ENCODE measurements at regions of chr20 and their contacts with region 1.

Region 1: GRCh38 chr20:56554869-56555268 is 21.8 kb downstream of the FAM209B start:
- DNase-seq: peak; percentile 29
- H3K4me3 ChIP-seq: no peak overlapping the region
- H3K27ac ChIP-seq: peak overlapping the region in 2 of 4 donors; percentile 28 to 51
- H3K4me1 ChIP-seq: peaks cover 0 to 4% (median 2%) of the 10 kb centered on the region in 4 donors
- H3K27me3 ChIP-seq: no peaks in the 10 kb centered on the region
- CTCF ChIP-seq: no peak
- EP300 ChIP-seq: no peak
- POLR2A ChIP-seq: no peak

Region 2: GRCh38 chr20:56964888-56965287 is 410.0 kb after region 1 on chr20:
- in situ Hi-C with region 1: loop called in 3 of 4 experiments (anchors 10 kb)
- intact Hi-C with region 1: loop called (anchors 10 kb)
- DNase-seq: no peak
- H3K4me3 ChIP-seq: no peak overlapping the region
- H3K27ac ChIP-seq: no peak overlapping the region
- H3K4me1 ChIP-seq: no peaks in the 10 kb centered on the region
- H3K27me3 ChIP-seq: peaks cover 6% of the 10 kb centered on the region
- CTCF ChIP-seq: no peak
- EP300 ChIP-seq: no peak
- POLR2A ChIP-seq: no peak

Region 3: DNA sequence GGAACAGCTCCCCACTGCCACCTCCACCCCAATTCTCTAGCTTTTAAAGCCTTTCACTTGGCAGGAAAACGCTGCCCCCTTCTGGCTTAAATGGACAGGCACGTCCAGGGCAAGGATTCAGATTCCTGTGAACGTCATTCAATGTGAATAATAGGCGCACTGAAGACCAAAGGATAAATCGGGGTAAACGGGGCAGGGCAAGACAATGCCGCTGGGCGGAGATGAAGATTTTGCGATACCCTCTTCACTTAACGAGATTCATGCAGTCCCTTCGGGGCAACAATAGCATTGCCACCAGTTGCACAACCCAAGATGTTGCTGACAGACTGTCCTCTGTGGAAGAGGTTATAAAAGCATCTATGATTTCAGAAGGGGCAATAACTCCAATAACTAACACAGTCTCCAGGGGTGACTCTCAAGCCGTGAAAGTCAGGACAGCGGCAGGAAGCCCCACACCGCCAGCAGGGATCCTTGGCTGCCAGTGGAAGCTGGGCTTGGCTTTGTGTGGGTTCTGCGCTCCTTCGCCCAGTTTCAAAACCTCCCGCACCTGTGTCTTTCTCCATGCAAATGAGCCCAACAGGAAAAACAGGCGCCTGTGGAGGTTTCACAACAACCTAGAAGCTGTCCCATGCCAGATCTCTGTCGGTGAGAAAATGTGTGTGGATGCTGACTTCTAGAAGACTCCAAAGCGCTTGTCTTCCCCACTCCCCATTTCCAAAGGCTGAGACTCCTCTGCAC is 419.8 kb after region 1 on chr20:
- in situ Hi-C with region 1: loop called in 3 of 4 experiments (anchors 10 kb)
- intact Hi-C with region 1: loop called (anchors 10 kb)
- DNase-seq: peak; percentile 59
- H3K4me3 ChIP-seq: no peak overlapping the region
- H3K27ac ChIP-seq: no peak overlapping the region
- H3K4me1 ChIP-seq: no peaks in the 10 kb centered on the region
- H3K27me3 ChIP-seq: peaks cover 42% of the 10 kb centered on the region
- CTCF ChIP-seq: peak; percentile 51 to 64 (median 57)
- EP300 ChIP-seq: no peak
- POLR2A ChIP-seq: no peak

Region 4: DNA sequence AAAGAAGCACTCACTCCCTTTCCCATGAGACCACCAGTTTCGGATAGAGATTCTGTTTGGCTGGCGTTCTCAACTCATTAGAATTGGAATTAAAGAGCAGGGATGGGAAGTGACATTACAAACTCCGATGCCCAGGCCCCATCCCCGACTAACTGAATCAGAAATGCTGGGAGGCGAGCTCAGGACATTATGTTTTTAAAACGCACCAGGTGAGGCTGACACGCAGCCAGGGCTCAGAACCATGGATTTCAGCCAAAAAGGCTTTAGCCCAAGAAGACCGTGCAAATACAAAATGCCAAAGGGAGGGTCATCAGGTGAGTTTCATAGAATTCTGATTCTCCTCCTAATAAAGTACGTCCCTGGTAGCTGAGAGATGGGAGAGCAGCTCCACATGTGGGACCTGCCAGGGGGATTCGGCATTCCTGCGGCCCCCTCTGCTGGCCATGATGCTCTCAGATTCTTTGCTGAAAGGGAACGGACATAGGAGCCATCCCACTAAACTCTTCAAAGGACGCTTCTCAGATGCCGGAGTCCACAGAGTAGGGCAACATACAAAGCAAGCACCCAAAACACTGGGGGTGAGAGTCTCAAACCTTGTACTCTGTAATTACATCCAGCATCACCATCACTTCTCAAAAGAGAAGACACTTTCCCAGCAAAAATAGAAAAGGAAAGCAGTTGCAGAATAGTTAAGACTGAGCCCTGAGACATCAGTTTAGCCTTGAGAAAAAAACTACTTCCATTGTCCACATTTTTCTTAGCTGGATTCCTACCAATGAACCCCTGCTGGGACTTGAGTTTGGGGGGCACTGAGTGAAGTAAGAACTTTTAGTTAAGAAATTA is 506.4 kb after region 1 on chr20:
- in situ Hi-C with region 1: loop called in 1 of 4 experiments (anchors 25 kb)
- intact Hi-C with region 1: no loop called
- DNase-seq: no peak
- H3K4me3 ChIP-seq: no peak overlapping the region
- H3K27ac ChIP-seq: no peak overlapping the region
- H3K4me1 ChIP-seq: no peaks in the 10 kb centered on the region
- H3K27me3 ChIP-seq: peaks cover 26% of the 10 kb centered on the region
- CTCF ChIP-seq: peak in 2 of 5 experiments; percentile 11 to 18
- EP300 ChIP-seq: no peak
- POLR2A ChIP-seq: no peak

Region 5: GRCh38 chr20:57346477-57346876 is 791.6 kb after region 1 on chr20:
- in situ Hi-C with region 1: loop called in 2 of 4 experiments (anchors 25 kb)
- intact Hi-C with region 1: loop called (anchors 10 kb)
- DNase-seq: peak; percentile 77
- H3K4me3 ChIP-seq: no peak overlapping the region
- H3K27ac ChIP-seq: no peak overlapping the region
- H3K4me1 ChIP-seq: no peaks in the 10 kb centered on the region
- H3K27me3 ChIP-seq: no peaks in the 10 kb centered on the region
- CTCF ChIP-seq: peak; percentile 68 to 77 (median 74)
- EP300 ChIP-seq: no peak
- POLR2A ChIP-seq: no peak